ENCODE measurements at regions of chr6 and their contacts with region 1.

Region 1: GRCh38 chr6:117440558-117441525 is 15.1 kb upstream of the ROS1 start:
- DNase-seq: peak in 1 of 2 experiments; percentile 96
- H3K4me3 ChIP-seq: peak overlapping the region; percentile 6
- H3K27ac ChIP-seq: peak overlapping the region; percentile 76
- H3K4me1 ChIP-seq: peaks cover 32% of the 10 kb centered on the region
- H3K27me3 ChIP-seq: no peaks in the 10 kb centered on the region
- CTCF ChIP-seq: no peak

Region 2: GRCh38 chr6:117399924-117400323 is 40.9 kb before region 1 on chr6:
- CTCF ChIA-PET with region 1: interaction called, 3 read pairs
- POLR2A ChIA-PET with region 1: no interaction called
- intact Hi-C with region 1: loop called (anchors 5 kb)
- DNase-seq: no peak
- H3K4me3 ChIP-seq: no peak overlapping the region
- H3K27ac ChIP-seq: no peak overlapping the region
- H3K4me1 ChIP-seq: no peaks in the 10 kb centered on the region
- H3K27me3 ChIP-seq: no peaks in the 10 kb centered on the region
- CTCF ChIP-seq: peak; percentile 45; the same call in 1 of the 2 replicates

Region 3: GRCh38 chr6:117615894-117616390 is 175.1 kb after region 1 on chr6:
- CTCF ChIA-PET with region 1: no interaction called
- POLR2A ChIA-PET with region 1: no interaction called
- intact Hi-C with region 1: no loop called
- DNase-seq: peak in 1 of 2 experiments; percentile 46
- H3K4me3 ChIP-seq: no peak overlapping the region
- H3K27ac ChIP-seq: no peak overlapping the region
- H3K4me1 ChIP-seq: peaks cover 12% of the 10 kb centered on the region; the same call in 1 of the 2 replicates
- H3K27me3 ChIP-seq: no peaks in the 10 kb centered on the region
- CTCF ChIP-seq: no peak

Region 4: GRCh38 chr6:118152524-118152923 is 711.7 kb after region 1 on chr6:
- CTCF ChIA-PET with region 1: no interaction called
- POLR2A ChIA-PET with region 1: no interaction called
- intact Hi-C with region 1: no loop called
- DNase-seq: no peak
- H3K4me3 ChIP-seq: no peak overlapping the region
- H3K27ac ChIP-seq: no peak overlapping the region
- H3K4me1 ChIP-seq: no peaks in the 10 kb centered on the region
- H3K27me3 ChIP-seq: no peaks in the 10 kb centered on the region
- CTCF ChIP-seq: no peak